CD8-positive, alpha-beta T cell (primary cell): ENCODE measurements at regions of chr3 and their contacts with region 1.

Region 1: DNA sequence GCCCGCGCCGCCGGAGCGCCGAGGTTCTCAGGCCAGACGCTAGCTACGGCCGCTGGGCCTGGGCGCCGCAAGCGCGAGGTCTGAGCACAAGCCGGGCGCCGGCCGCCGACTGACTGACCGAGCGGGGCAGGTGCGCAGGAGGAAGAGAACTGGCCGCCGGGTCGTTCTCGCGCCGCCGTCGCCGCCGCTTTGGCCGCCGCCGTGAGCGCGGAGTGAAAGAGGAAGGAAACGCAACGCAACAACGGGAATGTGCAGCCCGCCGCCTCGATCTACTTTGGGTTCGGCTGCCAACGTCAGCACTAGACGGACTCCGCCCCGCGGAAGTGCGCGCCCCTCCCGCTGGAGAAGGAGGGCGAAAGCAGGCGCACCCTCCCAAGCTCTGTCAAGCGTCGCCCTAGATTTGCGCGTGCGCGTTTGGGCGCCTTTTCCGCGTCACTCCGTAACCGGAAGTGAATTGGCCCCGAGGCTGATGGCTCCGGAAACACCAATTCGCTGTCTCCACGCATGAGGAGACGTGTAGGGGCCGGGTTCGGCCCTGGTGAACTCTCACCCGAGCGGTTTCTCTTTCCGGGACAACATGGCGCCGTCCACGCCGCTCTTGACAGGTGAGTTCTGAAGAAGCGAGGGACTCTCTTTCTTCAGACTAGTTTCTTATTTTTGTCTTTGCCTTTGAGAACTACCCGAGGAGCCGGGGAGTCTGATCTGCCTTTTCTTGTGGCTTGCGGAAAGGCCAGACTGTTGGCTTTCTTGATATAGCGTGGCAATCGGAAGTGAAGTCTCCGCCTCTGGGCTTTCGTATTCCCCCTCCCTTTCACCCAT is at the starts of genes EIF2A and SERP1:
- DNase-seq: peak; percentile 99 to 100 (median 99)
- ATAC-seq: peak; percentile 88
- H3K4me3 ChIP-seq: peak within 1 kb of the TSS; percentile 61 to 84
- H3K4me3 Mint-ChIP-seq: peak within 1 kb of the TSS; percentile 97
- H3K27ac ChIP-seq: peak within 1 kb of the TSS; percentile 91 to 98
- H3K27ac Mint-ChIP-seq: peak within 1 kb of the TSS; percentile 99
- H3K4me1 ChIP-seq: peaks cover 36% of the 10 kb centered on the region
- H3K4me1 Mint-ChIP-seq: peaks cover 74% of the 10 kb centered on the region
- H3K27me3 ChIP-seq: no peaks in the 10 kb centered on the region
- H3K27me3 Mint-ChIP-seq: no peaks in the 10 kb centered on the region
- CTCF ChIP-seq: no peak
- total RNA-seq, gene EIF2A: 156 to 162 TPM
- total RNA-seq, gene SERP1: 143 to 151 TPM

Region 2: GRCh38 chr3:149086232-149086988 is 1460.0 kb before region 1 on chr3 and contains the start of gene HLTF:
- CTCF ChIA-PET with region 1: no interaction called
- POLR2A ChIA-PET with region 1: no interaction called
- intact Hi-C with region 1: loop called in 1 of 2 experiments (anchors 1 kb)
- DNase-seq: peak; percentile 82 to 97 (median 92)
- ATAC-seq: peak; percentile 98
- H3K4me3 ChIP-seq: peak within 1 kb of the TSS; percentile 87 to 94
- H3K4me3 Mint-ChIP-seq: peak within 1 kb of the TSS; percentile 99
- H3K27ac ChIP-seq: peak within 1 kb of the TSS; percentile 57 to 63
- H3K27ac Mint-ChIP-seq: peak within 1 kb of the TSS; percentile 92
- H3K4me1 ChIP-seq: peaks cover 13% of the 10 kb centered on the region
- H3K4me1 Mint-ChIP-seq: peaks cover 21% of the 10 kb centered on the region
- H3K27me3 ChIP-seq: no peaks in the 10 kb centered on the region
- H3K27me3 Mint-ChIP-seq: no peaks in the 10 kb centered on the region
- CTCF ChIP-seq: no peak
- total RNA-seq, gene HLTF: 4.6 to 6.3 TPM

Region 3: GRCh38 chr3:150528354-150528797 is 18.1 kb before region 1 on chr3:
- CTCF ChIA-PET with region 1: interaction called, 4 read pairs
- POLR2A ChIA-PET with region 1: no interaction called
- intact Hi-C with region 1: loop called in 1 of 2 experiments (anchors 2 kb)
- DNase-seq: peak in 2 of 9 experiments; percentile 45 to 50
- ATAC-seq: peak; percentile 54
- H3K4me3 ChIP-seq: no peak overlapping the region
- H3K4me3 Mint-ChIP-seq: no peak overlapping the region
- H3K27ac ChIP-seq: no peak overlapping the region
- H3K27ac Mint-ChIP-seq: no peak overlapping the region
- H3K4me1 ChIP-seq: no peaks in the 10 kb centered on the region
- H3K4me1 Mint-ChIP-seq: no peaks in the 10 kb centered on the region
- H3K27me3 ChIP-seq: no peaks in the 10 kb centered on the region
- H3K27me3 Mint-ChIP-seq: no peaks in the 10 kb centered on the region
- CTCF ChIP-seq: peak; percentile 67

Region 4: DNA sequence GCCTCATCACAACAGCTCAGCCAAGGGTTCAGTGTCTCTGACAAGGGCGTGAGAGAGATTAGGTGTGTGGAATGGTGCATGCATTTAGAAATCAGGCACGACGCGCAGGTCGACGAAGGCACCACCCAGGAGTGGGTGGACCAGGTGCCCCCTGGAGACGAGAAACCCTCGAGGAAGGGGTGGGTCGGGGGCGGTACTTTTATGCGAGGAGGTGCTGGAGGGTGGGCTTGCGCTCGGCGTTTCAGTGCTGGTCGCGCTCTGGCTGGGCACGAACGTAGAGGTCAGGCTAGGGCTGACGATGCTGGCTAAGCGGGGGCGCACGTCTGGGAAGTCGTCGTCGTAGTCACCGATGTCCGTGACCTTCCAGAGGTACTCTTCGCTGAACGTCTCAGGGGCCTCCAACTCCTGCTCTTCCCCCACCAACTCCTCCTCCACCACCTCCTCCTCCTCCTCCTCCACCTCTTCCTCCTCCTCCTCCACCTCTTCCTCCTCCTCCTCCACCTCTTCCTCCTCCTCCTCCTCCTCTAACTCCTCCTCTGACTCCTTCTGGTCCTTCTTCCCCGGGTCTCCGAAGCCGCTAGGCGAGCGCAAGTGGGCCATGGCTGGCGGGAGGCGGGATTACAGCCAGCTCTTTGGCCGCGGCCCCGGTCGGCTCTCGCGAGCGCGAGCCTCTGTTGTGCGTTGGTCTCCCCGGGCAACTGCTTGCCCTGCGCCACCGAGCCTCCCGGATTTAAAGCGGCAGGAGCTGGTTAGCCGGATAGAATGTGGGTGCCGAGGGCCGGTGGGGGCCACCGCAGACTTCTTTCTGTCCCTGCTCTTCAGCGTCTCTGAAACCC is 157.1 kb after region 1 on chr3 and contains the start of gene ERICH6:
- CTCF ChIA-PET with region 1: interaction called, 3 read pairs
- POLR2A ChIA-PET with region 1: interaction called, 11 read pairs
- intact Hi-C with region 1: loop called (anchors 1 kb)
- DNase-seq: peak; percentile 61 to 89 (median 74)
- ATAC-seq: peak; percentile 77
- H3K4me3 ChIP-seq: peak within 1 kb of the TSS; percentile 69 to 89
- H3K4me3 Mint-ChIP-seq: peak within 1 kb of the TSS; percentile 96
- H3K27ac ChIP-seq: peak within 1 kb of the TSS; percentile 83 to 98
- H3K27ac Mint-ChIP-seq: peak within 1 kb of the TSS; percentile 94
- H3K4me1 ChIP-seq: peaks cover 9% of the 10 kb centered on the region
- H3K4me1 Mint-ChIP-seq: peaks cover 23% of the 10 kb centered on the region
- H3K27me3 ChIP-seq: no peaks in the 10 kb centered on the region
- H3K27me3 Mint-ChIP-seq: no peaks in the 10 kb centered on the region
- CTCF ChIP-seq: no peak
- total RNA-seq, gene ERICH6: 0.28 to 0.52 TPM